Activated CD8-positive, alpha-beta T cell treated with anti-CD3 and anti-CD28 coated beads for 36 hours (primary cell): ENCODE measurements at regions of chr2 and their contacts with region 1.

Region 1: DNA sequence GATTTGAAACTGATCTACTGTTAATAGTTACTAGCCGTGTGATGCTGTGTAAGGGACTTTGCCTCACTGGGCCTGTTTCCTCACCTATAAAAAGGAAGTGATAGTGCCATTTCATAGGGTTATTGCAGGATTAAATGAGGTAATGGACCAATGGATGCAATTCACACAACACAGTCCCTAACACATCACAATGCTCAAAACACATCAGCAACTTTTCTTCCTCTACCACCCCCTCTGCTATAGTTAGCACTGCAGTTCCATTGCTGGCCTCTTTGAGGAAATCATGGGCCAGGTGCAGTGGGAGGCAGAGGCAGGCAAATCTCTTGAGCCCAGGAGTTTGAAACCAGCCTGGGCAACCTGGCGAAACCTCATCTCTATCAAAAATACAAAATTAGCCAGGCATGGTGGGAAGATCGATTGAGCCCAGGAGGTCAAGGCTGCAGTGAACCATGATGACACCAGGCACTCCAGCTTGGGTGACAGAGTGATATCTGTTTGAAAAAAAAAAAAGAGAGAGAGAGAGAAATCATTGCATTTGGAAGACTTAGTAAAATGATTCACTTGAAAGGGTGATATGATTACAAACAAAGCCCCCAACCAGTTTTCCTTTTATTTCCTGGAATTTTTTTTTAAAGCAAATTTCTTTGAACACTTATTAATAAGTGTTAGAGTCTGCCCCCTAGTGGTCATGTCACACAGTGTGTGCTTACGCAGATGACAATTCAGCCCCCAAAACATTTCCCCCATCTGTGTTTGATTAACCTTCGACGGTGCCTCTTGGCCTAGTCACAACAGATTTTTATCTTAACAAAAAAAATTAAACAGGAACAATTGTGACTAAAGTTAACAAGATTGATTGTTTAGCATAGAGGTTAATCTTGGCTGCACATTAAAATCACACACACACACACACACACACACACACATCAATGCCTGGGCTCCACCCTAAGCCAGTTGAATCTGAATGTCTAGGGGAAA is 88.6 kb upstream of the BCL11A start:
- DNase-seq: peak; percentile 56
- ATAC-seq: peak; percentile 65
- H3K4me3 Mint-ChIP-seq: no peak overlapping the region
- H3K27ac Mint-ChIP-seq: no peak overlapping the region
- H3K4me1 Mint-ChIP-seq: no peaks in the 10 kb centered on the region
- H3K27me3 Mint-ChIP-seq: peaks cover 2% of the 10 kb centered on the region
- CTCF ChIP-seq: peak; percentile 88

Region 2: DNA sequence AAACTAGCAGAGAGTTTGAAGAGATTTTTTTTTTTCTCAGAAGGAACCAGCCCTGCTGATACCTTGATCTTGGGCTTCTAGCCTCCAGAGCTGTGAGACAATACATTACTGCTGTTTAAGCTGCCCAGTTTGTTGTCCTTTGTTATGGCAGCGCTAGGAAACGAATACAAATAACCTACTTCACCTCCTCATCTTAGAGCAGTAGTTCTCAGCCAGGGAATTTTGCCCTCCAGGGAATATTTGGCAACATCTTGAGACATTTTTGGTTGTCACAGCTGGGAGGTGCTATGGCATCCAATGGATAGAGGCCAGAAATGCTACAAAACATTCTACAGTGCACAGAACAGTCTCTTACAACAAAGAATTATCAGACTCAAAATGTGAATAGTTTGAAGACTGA is 44.8 kb before region 1 on chr2:
- CTCF ChIA-PET with region 1: no interaction called
- POLR2A ChIA-PET with region 1: no interaction called
- intact Hi-C with region 1: no loop called
- DNase-seq: no peak
- ATAC-seq: no peak
- H3K4me3 Mint-ChIP-seq: no peak overlapping the region
- H3K27ac Mint-ChIP-seq: no peak overlapping the region
- H3K4me1 Mint-ChIP-seq: no peaks in the 10 kb centered on the region
- H3K27me3 Mint-ChIP-seq: peaks cover 4% of the 10 kb centered on the region
- CTCF ChIP-seq: no peak

Region 3: GRCh38 chr2:60629305-60629662 is 12.8 kb before region 1 on chr2:
- CTCF ChIA-PET with region 1: interaction called, 10 read pairs
- POLR2A ChIA-PET with region 1: interaction called, 4 read pairs
- intact Hi-C with region 1: no loop called
- DNase-seq: no peak
- ATAC-seq: no peak
- H3K4me3 Mint-ChIP-seq: no peak overlapping the region
- H3K27ac Mint-ChIP-seq: no peak overlapping the region
- H3K4me1 Mint-ChIP-seq: no peaks in the 10 kb centered on the region
- H3K27me3 Mint-ChIP-seq: peaks cover 12% of the 10 kb centered on the region
- CTCF ChIP-seq: no peak